ENCODE measurements at regions of chr1 and their contacts with region 1.

Region 1: DNA sequence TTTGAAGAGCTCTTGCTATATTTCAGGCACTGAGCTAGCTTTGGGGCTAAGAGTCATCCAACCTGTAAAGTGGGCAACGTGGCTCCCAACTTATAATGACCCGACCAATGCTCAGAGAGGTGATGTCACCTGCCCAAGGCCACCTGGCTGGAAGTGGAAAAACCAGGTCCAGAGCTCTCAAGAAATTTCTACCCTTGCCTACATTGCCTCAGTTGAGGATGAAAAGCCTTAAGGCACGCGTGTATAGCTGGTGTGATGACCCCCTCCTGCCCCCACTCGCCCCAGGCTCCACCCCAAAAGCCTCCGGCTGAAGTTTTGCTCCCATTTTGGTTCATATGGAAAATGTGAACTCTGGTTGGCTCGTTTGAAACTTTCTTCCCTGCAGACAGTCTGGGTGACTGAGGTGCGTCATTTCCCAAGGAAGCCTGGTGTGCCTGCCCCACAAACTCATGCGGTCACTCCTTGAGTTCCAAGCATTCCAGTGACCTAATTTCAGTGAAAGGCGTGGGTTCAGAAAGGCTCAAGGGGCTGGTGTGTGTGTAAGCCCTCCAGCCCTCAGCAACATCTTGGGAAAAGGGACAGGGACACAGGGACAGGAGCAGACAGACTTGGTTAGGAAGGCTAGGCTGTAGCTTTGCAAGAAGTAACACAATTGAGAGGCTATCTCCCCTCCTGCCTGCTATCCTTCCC is 20.5 kb downstream of the HTR1D start:
- DNase-seq: no peak
- H3K4me3 ChIP-seq: no peak overlapping the region
- H3K27ac ChIP-seq: no peak overlapping the region
- H3K4me1 ChIP-seq: 0 out of 7 replicates have a peak, but pooled peaks cover 0 to 3% (median 0%) of the 10 kb centered on the region in 4 experiments
- H3K27me3 ChIP-seq: no peaks in the 10 kb centered on the region
- CTCF ChIP-seq: no peak
- EP300 ChIP-seq: no peak
- POLR2A ChIP-seq: no peak
- RAD21 ChIP-seq: no peak

Region 2: GRCh38 chr1:23114424-23115079 is 82.2 kb before region 1 on chr1:
- CTCF ChIA-PET with region 1: no interaction called
- POLR2A ChIA-PET with region 1: no interaction called
- DNase-seq: no peak
- H3K4me3 ChIP-seq: no peak overlapping the region
- H3K27ac ChIP-seq: no peak overlapping the region
- H3K4me1 ChIP-seq: peaks cover 0 to 5% (median under 1%) of the 10 kb centered on the region in 4 experiments; a peak in 3 of 7 replicates
- H3K27me3 ChIP-seq: no peaks in the 10 kb centered on the region
- CTCF ChIP-seq: no peak
- EP300 ChIP-seq: no peak
- POLR2A ChIP-seq: no peak
- RAD21 ChIP-seq: no peak

Region 3: GRCh38 chr1:23210351-23210785 is 13.6 kb after region 1 on chr1:
- CTCF ChIA-PET with region 1: interaction called, 11 read pairs
- POLR2A ChIA-PET with region 1: interaction called, 4 read pairs
- DNase-seq: peak in 1 of 2 experiments; percentile 65
- H3K4me3 ChIP-seq: no peak overlapping the region
- H3K27ac ChIP-seq: no peak overlapping the region
- H3K4me1 ChIP-seq: peaks cover 0 to 2% (median 0%) of the 10 kb centered on the region in 4 experiments; a peak in 1 of 7 replicates
- H3K27me3 ChIP-seq: no peaks in the 10 kb centered on the region
- CTCF ChIP-seq: peak; percentile 57 to 73 (median 72)
- EP300 ChIP-seq: no peak
- POLR2A ChIP-seq: no peak
- RAD21 ChIP-seq: peak; percentile 44 to 69